AG04449 (cell line): ENCODE measurements at regions of chr14 and their contacts with region 1.

Region 1: DNA sequence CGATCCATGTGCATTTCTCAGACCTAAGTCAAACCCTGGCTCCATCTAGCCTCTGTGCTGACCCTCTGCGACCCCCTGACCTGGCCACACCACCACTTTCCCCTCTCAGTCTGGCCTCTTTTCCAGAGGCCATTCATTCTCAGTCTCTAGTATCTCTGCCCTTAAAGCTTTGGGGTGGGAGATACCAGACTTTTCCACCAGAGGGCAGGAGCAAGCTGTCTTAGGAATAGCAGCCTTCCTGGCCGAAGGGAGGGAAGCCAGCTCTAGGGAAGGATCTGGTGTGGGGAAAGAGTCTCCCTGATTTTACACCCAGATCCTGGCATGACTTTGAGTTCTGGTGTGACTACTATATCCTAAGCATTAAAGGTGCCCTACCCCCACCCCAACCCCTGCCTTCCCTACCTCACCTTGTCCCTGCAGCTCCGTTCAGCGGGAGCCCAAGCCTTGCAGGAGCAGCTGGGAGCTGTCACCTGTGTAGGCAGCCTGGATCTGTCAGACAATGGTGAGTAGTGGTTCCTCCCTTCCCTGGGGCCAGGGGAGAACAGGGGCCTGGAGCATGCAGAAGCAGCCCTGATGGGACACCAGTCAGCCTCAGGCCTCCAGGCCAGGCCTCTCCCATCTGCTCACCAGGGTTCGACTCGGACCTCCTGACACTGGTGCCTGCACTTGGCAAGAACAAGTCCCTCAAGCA is 6.6 kb downstream of the CARMIL3 start:
- DNase-seq: peak; percentile 16
- H3K4me3 ChIP-seq: no peak overlapping the region
- CTCF ChIP-seq: peak; percentile 82

Region 2: DNA sequence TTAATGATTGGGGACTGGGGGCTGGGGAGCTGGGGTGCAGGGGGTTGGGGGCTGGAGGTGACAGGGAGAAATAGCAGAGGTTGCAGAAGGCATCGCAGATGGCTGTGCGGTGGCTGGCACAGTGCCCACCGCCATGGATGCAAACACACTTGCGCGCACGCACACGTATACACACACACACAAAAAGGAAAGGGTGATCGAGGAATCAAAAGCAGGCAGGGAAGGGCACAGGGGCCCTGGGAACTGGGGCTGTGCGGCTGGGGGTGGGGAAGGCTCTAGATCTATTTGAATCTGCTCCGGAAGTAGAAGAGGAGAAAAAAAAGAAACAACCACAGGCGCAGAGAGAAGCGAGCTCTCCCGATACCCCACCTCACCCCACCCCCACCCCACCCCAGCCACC is 546.2 kb before region 1 on chr14:
- CTCF ChIA-PET with region 1: no interaction called
- POLR2A ChIA-PET with region 1: no interaction called
- DNase-seq: no peak
- H3K4me3 ChIP-seq: no peak overlapping the region
- CTCF ChIP-seq: no peak

Region 3: GRCh38 chr14:23763394-23763793 is 295.0 kb before region 1 on chr14:
- CTCF ChIA-PET with region 1: no interaction called
- POLR2A ChIA-PET with region 1: no interaction called
- DNase-seq: no peak
- H3K4me3 ChIP-seq: no peak overlapping the region
- CTCF ChIP-seq: no peak

Region 4: GRCh38 chr14:24013654-24014514 is 44.5 kb before region 1 on chr14:
- CTCF ChIA-PET with region 1: interaction called, 14 read pairs
- POLR2A ChIA-PET with region 1: no interaction called
- DNase-seq: no peak
- H3K4me3 ChIP-seq: no peak overlapping the region
- CTCF ChIP-seq: peak; percentile 75

Region 5: DNA sequence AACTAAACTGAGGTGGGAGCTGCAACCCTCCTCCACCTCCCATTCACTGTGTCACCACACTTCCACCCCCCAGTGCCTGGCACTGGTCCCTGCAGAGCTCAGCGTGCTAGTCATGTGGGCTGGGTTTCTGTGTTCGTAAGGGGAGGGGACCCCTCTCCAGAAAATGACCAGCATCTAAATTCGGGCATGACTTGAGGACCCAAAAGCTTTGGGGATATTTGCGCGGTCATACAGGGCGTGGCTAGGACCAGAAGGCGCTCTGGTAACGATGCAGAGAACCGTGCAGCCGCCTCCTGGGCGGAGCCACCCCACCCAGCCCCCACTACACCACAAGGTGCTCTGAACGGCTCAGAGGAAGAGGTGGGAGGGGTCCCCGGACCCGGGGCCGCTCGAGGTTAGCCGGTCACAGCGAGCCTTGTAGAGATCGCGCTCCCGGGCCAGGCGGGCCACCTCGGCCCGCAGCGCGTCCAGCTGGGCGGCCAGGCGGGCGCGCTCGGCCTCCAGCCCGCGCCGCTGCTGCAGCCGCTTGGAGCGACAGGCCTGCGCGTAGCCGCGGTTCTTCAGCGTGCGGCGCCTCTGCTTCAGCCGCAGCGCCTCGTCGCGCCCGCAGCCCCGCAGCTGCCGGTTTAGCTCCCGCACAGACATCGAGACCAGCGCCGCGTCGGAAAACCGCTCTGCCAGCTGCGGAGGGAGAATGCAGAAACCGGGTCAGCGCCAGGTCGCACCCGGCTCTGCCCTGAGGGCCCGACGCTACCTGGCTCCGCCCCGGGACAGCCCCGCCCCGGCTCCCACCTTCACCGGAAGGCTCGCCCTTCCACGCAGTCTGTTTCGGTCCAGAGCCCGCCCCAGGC is 22.7 kb after region 1 on chr14:
- CTCF ChIA-PET with region 1: interaction called, 74 read pairs
- POLR2A ChIA-PET with region 1: no interaction called
- DNase-seq: no peak
- H3K4me3 ChIP-seq: peak overlapping the region; percentile 55
- CTCF ChIP-seq: no peak

Region 6: DNA sequence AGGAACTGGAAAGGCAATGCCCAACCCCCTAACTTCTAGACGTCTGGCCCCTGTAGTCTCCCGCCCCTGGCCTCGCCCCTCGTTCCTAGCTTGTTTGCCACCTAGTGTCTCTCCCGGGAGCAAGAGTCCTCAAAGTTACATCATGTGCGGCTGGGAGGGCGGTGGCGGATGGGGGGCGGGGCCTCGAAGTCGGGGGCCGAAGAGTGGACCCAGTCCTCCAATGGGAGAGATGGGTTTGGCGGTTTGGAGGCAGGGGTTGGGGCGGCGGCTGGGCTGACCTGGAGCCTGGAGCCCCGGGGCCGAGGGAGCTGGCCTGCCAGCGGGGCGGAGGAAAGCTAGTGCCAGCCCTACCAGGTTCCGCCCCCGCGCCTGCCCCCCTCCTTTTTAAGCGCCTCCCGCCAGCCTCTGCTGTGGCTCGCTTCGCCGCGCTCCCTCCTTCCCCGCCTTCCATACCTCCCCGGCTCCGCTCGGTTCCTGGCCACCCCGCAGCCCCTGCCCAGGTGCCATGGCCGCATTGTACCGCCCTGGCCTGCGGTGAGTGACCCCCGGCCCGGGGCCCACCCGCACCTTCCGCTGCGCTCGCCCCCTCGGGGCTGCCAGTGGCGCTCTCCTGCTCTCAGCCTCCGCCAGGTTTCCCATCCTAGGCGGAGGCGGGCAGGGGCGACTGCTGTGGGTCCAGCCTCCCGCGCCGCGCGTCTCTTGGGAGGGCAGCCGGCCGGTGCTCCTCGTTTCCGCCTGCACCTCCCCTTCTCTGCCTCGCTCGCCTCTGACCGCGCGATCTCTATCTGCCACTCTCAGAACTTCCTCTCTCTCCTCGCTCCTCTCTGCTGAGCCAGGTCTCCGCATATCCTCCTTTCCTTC is 35.7 kb after region 1 on chr14 and contains the start of gene PCK2:
- CTCF ChIA-PET with region 1: interaction called, 536 read pairs
- POLR2A ChIA-PET with region 1: interaction called, 15 read pairs
- DNase-seq: peak; percentile 63
- H3K4me3 ChIP-seq: peak within 1 kb of the TSS; percentile 87
- CTCF ChIP-seq: peak; percentile 9

Region 7: GRCh38 chr14:24114536-24115450 is 56.4 kb after region 1 on chr14 and contains the starts of genes DCAF11 and NRL:
- CTCF ChIA-PET with region 1: interaction called, 247 read pairs
- POLR2A ChIA-PET with region 1: interaction called, 8 read pairs
- DNase-seq: peak; percentile 99
- H3K4me3 ChIP-seq: peak within 1 kb of the TSS; percentile 96
- CTCF ChIP-seq: no peak

Region 8: GRCh38 chr14:24146978-24147760 is 88.8 kb after region 1 on chr14 and contains the start of gene RNF31:
- CTCF ChIA-PET with region 1: interaction called, 11 read pairs
- POLR2A ChIA-PET with region 1: no interaction called
- DNase-seq: peak; percentile 88
- H3K4me3 ChIP-seq: peak within 1 kb of the TSS; percentile 92
- CTCF ChIP-seq: no peak

Region 9: DNA sequence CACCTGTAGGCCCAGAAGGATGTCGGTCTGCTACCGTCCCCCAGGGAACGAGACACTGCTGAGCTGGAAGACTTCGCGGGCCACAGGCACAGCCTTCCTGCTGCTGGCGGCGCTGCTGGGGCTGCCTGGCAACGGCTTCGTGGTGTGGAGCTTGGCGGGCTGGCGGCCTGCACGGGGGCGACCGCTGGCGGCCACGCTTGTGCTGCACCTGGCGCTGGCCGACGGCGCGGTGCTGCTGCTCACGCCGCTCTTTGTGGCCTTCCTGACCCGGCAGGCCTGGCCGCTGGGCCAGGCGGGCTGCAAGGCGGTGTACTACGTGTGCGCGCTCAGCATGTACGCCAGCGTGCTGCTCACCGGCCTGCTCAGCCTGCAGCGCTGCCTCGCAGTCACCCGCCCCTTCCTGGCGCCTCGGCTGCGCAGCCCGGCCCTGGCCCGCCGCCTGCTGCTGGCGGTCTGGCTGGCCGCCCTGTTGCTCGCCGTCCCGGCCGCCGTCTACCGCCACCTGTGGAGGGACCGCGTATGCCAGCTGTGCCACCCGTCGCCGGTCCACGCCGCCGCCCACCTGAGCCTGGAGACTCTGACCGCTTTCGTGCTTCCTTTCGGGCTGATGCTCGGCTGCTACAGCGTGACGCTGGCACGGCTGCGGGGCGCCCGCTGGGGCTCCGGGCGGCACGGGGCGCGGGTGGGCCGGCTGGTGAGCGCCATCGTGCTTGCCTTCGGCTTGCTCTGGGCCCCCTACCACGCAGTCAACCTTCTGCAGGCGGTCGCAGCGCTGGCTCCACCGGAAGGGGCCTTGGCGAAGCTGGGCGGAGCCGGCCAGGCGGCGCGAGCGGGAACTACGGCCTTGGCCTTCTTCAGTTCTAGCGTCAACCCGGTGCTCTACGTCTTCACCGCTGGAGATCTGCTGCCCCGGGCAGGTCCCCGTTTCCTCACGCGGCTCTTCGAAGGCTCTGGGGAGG is 252.5 kb after region 1 on chr14 and contains the start of gene LTB4R:
- CTCF ChIA-PET with region 1: interaction called, 33 read pairs
- POLR2A ChIA-PET with region 1: no interaction called
- DNase-seq: no peak
- H3K4me3 ChIP-seq: peak within 1 kb of the TSS; percentile 33
- CTCF ChIP-seq: peak; percentile 48